Endothelial cell of umbilical vein (primary cell): ENCODE measurements at regions of chr13 and their contacts with region 1.

Region 1: GRCh38 chr13:80666782-80667552 is 326.0 kb upstream of the SPRY2 start:
- DNase-seq: no peak
- H3K4me3 ChIP-seq: no peak overlapping the region
- H3K27ac ChIP-seq: no peak overlapping the region
- H3K4me1 ChIP-seq: peaks cover 8% of the 10 kb centered on the region
- H3K27me3 ChIP-seq: no peaks in the 10 kb centered on the region
- CTCF ChIP-seq: no peak
- POLR2A ChIP-seq: no peak

Region 2: DNA sequence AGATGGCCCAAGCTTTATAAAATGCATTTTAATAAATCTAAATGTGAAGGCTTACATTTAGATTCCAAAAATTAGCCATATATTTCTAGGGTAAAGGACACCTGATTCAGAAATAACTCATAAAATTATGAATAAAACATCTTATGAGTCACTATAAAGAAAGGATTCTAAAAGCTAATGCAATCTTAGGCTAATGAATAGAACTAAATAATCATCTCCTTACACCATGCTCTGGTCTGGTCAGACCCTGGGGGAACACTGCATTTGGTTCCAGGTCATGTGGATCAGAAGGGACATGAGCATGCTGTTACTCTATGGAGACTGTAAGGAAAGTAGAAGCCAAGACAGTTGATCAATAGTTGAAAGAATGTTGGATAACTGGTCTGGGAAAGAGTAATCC is 815.6 kb before region 1 on chr13:
- CTCF ChIA-PET with region 1: no interaction called
- POLR2A ChIA-PET with region 1: no interaction called
- dilution Hi-C with region 1: no loop called
- intact Hi-C with region 1: no loop called
- DNase-seq: no peak
- H3K4me3 ChIP-seq: no peak overlapping the region
- H3K27ac ChIP-seq: no peak overlapping the region
- H3K4me1 ChIP-seq: no peaks in the 10 kb centered on the region
- H3K27me3 ChIP-seq: no peaks in the 10 kb centered on the region
- CTCF ChIP-seq: no peak
- POLR2A ChIP-seq: no peak

Region 3: GRCh38 chr13:80444240-80445015 is 222.5 kb before region 1 on chr13:
- CTCF ChIA-PET with region 1: no interaction called
- POLR2A ChIA-PET with region 1: no interaction called
- dilution Hi-C with region 1: no loop called
- intact Hi-C with region 1: no loop called
- DNase-seq: no peak
- H3K4me3 ChIP-seq: no peak overlapping the region
- H3K27ac ChIP-seq: no peak overlapping the region
- H3K4me1 ChIP-seq: no peaks in the 10 kb centered on the region
- H3K27me3 ChIP-seq: no peaks in the 10 kb centered on the region
- CTCF ChIP-seq: no peak
- POLR2A ChIP-seq: no peak

Region 4: GRCh38 chr13:80690208-80690607 is 23.2 kb after region 1 on chr13:
- CTCF ChIA-PET with region 1: no interaction called
- POLR2A ChIA-PET with region 1: no interaction called
- dilution Hi-C with region 1: no loop called
- intact Hi-C with region 1: no loop called
- DNase-seq: no peak
- H3K4me3 ChIP-seq: no peak overlapping the region
- H3K27ac ChIP-seq: no peak overlapping the region
- H3K4me1 ChIP-seq: no peaks in the 10 kb centered on the region
- H3K27me3 ChIP-seq: no peaks in the 10 kb centered on the region
- CTCF ChIP-seq: no peak
- POLR2A ChIP-seq: no peak

Region 5: GRCh38 chr13:80923907-80924306 is 256.9 kb after region 1 on chr13:
- CTCF ChIA-PET with region 1: no interaction called
- POLR2A ChIA-PET with region 1: no interaction called
- dilution Hi-C with region 1: no loop called
- intact Hi-C with region 1: loop called (anchors 5 kb)
- DNase-seq: peak; percentile 22
- H3K4me3 ChIP-seq: no peak overlapping the region
- H3K27ac ChIP-seq: peak overlapping the region; percentile 65
- H3K4me1 ChIP-seq: peaks cover 27% of the 10 kb centered on the region
- H3K27me3 ChIP-seq: no peaks in the 10 kb centered on the region
- CTCF ChIP-seq: no peak
- POLR2A ChIP-seq: no peak